ENCODE measurements at regions of chr4 and their contacts with region 1.

Region 1: GRCh38 chr4:87255755-87256154 is 35.3 kb upstream of the KLHL8 start:
- DNase-seq: no peak

Region 2: DNA sequence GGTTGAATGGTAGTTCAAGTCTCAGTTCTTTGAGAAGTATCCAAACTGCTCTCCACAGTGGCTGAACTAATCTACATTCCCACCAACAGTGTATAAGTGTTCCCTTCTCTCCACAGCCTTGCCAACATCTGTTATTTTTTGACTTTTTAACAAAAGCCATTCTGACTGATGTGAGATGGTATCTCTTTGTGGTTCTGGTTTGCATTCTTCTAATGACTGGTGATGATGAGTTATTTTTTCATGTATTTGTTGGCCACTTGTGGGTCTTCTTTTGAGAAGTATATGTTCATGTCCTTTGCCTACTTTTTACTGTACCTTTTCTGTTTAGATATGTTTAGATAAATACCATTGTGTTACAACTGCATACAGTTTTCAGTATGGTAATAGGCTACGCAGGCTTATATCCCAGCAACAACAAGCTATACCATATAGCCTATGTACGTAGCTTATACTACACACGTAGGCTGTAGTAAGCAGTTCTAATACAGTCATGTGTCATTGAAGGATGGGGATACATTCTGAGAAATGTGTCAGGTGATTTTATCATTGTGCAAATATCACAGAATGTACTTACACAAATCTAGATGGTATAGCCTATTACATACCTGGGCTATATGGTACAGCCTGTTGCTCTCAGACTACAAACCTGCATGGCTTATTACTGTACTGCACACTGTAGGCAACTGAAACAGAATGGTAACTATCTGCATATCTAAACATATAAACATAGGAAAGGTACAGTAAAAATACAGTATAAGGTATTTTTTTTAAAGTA is 63.4 kb before region 1 on chr4:
- intact Hi-C with region 1: loop called in 1 of 2 experiments (anchors 2 kb)
- DNase-seq: no peak